ENCODE measurements at regions of chr6 and their contacts with region 1.

Region 1: GRCh38 chr6:118080547-118080946 is 173.5 kb downstream of the SLC35F1 start:
- DNase-seq: no peak
- CTCF ChIP-seq: no peak

Region 2: GRCh38 chr6:118061666-118062065 is 18.9 kb before region 1 on chr6:
- CTCF ChIA-PET with region 1: interaction called, 17 read pairs
- POLR2A ChIA-PET with region 1: no interaction called
- DNase-seq: no peak
- CTCF ChIP-seq: no peak

Region 3: DNA sequence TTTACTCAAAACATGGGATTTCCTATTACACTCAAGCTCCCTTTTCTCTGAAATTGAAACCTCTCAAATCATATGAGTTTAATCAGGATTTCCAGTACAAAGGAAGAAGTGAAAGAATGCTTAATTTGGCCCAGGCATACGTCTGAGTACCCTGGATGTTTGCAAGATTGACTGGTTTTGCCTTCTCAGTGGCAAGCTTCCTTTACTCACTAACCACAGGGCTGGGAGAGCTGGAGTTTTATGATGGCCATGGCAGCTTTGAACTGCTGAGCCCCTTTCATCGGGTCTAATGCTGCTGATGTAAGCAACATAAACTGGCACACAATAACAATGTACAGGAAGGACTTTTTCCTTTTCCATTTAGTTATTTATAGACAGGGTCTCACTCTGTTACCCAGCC is 21.3 kb after region 1 on chr6:
- CTCF ChIA-PET with region 1: interaction called, 12 read pairs
- POLR2A ChIA-PET with region 1: no interaction called
- DNase-seq: no peak
- CTCF ChIP-seq: no peak

Region 4: DNA sequence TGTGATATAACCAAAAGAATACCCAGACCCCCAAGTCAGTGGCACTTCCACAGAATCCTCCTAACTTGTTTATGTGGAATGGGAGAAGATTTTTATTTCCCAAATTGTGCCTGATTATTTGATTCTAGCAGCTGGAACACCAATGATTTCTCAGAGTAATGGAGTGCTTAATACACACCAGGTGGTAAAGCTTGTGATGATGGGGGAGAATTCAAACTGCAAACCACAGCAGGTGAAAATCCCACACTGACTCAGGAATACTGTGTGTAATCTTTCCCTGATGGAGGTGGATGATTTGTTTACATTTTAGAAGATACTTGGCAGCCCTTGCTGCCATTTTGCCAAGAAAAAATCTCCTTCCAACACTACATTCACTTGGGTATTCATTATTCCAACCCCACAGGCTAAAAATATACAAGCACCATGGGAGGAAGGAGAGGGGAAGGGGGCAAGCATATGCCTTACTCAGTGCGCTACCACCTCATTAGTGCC is 254.8 kb after region 1 on chr6:
- CTCF ChIA-PET with region 1: no interaction called
- POLR2A ChIA-PET with region 1: no interaction called
- DNase-seq: no peak
- CTCF ChIP-seq: no peak

Region 5: GRCh38 chr6:118864341-118865099 is 784.0 kb after region 1 on chr6:
- CTCF ChIA-PET with region 1: no interaction called
- POLR2A ChIA-PET with region 1: no interaction called
- DNase-seq: no peak
- CTCF ChIP-seq: no peak